ENCODE measurements at regions of chr10 and their contacts with region 1.

Region 1: DNA sequence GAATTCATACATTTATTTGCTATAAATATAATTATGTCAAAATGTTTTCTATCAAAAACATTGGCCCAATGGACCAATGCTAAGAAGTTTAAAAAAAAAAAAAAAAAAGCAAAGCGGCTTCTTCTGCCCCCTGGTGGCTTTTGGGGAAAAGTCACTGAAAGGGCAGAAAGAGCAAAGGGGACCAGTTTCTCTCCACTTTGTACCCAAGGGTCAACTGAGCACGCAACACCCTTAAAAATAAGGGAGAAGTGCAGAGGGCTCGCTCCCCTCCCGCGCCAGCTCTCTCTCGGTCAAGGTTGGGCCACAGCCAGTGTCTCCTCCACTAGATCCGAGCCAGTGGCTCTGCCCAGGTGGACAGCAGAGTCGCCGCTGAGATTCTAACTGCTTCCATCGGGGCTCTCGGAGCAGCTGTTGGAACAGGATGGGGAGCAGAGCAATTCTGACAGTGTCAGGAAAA is 136.4 kb upstream of the FGFR2 start:
- DNase-seq: no peak
- ATAC-seq: no peak

Region 2: DNA sequence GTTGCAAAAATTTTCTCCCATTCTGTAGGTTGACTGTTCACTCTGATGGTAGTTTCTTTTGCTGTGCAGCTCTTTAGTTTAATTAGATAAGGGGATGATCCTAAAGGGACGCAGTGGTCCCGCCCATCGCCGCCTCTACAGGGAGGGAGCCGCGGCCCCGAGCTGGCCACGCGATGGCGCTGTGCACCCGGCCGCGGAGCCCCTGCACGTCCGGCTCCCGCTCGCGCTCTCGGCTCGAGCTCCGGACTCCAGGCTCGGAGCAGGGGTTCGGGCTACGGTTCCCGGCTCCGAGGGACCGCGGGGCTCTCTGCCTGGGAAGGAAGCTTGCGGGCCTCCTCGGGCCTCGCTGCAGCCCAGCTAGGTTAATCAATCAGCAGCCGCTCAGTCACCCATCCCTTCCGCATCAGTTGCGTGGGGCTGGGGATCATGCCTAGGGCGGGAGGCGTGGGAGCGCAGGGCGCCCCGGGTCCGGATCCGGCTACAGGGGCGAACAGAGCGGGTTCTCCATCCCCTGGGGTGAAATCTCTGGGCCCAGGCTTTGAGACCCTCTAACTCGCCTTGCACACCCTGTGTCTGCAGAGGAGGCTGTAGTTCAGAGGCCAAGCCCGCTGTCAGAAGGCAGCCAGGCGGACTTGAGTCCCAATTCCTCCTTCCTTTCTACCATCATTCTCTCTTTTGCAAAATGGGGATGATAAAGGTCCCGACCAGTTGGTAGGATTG is 785.6 kb before region 1 on chr10:
- intact Hi-C with region 1: loop called (anchors 1 kb)
- DNase-seq: peak; percentile 88
- ATAC-seq: peak; percentile 96

Region 3: GRCh38 chr10:121608469-121609190 is 126.0 kb before region 1 on chr10:
- intact Hi-C with region 1: loop called (anchors 10 kb)
- DNase-seq: no peak
- ATAC-seq: peak; percentile 91

Region 4: GRCh38 chr10:121668314-121669027 is 66.1 kb before region 1 on chr10:
- intact Hi-C with region 1: no loop called
- DNase-seq: no peak
- ATAC-seq: peak; percentile 79

Region 5: GRCh38 chr10:121942749-121943416 is 208.3 kb after region 1 on chr10:
- intact Hi-C with region 1: no loop called
- DNase-seq: no peak
- ATAC-seq: peak; percentile 85

Measured in Right ventricle myocardium inferior (tissue), 1 donor.